Mammary epithelial cell (primary cell): ENCODE measurements at regions of chr4 and their contacts with region 1.

Region 1: GRCh38 chr4:2497931-2498330 is 29.0 kb downstream of the RNF4 start:
- DNase-seq: no peak
- H3K4me3 ChIP-seq: no peak overlapping the region
- H3K27ac ChIP-seq: no peak overlapping the region
- H3K4me1 ChIP-seq: no peaks in the 10 kb centered on the region
- H3K27me3 ChIP-seq: no peaks in the 10 kb centered on the region
- CTCF ChIP-seq: no peak

Region 2: DNA sequence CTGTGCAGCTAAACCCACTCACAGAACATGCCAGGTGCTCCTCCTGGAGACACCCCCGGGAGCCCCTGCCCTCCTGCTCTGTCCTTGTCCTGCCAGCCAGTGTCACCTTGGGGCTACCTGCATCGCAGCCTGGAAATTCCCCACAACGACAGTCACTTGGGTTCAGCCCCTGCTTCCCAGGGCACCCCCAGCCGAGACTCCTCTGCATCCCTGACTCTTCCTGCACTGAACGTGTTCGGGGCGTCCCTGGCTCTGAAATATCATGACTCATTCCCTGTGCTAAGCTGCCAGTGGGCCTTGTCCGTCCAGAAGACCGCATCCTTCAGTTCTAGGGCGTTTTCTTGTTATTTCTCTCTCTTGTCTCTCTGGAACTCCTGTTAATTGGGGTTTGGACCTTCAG is 73.3 kb before region 1 on chr4:
- CTCF ChIA-PET with region 1: no interaction called
- dilution Hi-C with region 1: loop called (anchors 5 kb)
- in situ Hi-C with region 1: no loop called
- intact Hi-C with region 1: no loop called
- DNase-seq: no peak
- H3K4me3 ChIP-seq: no peak overlapping the region
- H3K27ac ChIP-seq: no peak overlapping the region
- H3K4me1 ChIP-seq: no peaks in the 10 kb centered on the region
- H3K27me3 ChIP-seq: peaks cover 11% of the 10 kb centered on the region
- CTCF ChIP-seq: no peak

Region 3: DNA sequence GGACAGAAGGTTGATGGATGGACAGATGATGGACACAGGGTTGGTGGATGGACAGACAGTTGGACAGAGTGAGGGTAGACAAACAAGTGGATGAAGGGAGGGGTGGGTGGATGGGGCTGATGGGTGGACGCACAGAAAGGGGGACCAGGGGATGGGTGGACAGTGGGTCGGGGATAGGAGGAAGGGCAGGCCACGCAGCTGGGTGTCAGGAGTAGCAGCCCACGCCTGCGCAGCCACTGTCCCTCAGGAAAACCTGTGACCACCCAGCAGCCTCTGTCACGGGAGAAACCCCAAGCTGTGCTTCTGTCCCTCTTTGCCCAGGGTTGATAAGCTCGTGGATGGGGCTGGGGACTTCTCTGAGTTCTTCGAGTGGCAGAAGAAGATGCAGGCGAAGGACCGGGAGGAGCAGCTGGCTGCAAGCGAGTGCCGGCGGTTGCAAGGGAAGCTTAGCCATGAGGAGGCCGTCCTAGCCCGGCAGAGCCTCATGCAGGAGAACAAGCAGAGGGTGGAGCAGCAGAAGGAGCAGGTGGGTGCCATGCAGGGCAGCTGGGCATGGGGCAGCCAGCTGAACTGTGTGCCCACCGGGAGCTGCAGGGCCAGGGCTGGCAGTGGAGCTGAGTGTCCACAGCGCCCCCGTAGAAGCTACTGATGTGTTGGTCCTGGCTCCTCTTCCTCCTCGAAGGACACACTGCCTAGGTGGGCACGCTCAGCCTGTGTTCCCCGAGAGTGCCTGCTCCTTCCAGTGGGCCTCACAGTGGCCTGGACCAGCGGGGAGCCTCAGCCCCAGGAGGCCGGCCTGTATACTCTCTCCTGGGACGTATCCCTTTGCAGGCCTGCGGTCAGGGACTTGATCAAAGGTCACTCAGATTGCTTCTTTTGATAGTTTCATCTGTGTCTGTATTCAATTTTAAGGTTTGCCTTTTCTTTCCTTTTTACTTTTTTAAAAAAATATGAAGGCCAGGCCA is 45.8 kb before region 1 on chr4:
- CTCF ChIA-PET with region 1: no interaction called
- dilution Hi-C with region 1: loop called (anchors 5 kb)
- in situ Hi-C with region 1: no loop called
- intact Hi-C with region 1: no loop called
- DNase-seq: no peak
- H3K4me3 ChIP-seq: no peak overlapping the region
- H3K27ac ChIP-seq: no peak overlapping the region
- H3K4me1 ChIP-seq: no peaks in the 10 kb centered on the region
- H3K27me3 ChIP-seq: no peaks in the 10 kb centered on the region
- CTCF ChIP-seq: no peak

Region 4: DNA sequence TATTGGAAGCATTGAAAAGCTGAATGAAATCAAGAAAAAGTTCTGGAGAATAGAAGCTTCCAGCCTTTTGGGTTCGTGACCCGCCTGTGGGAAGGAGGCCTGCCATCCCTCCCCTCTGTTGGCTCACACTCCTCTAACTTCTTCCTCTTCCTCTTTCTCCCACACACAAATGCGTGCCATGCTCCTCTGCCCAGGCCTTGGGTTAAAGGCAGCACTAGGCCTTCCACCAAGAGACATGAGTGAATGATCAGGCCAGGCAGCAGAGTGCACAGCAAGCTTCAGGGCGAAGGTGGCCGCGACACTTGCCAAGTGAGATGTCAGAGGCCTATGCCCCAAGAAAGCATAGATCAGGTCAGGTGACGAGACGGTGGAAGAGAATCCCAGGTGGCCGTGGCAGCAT is 76.9 kb after region 1 on chr4:
- CTCF ChIA-PET with region 1: no interaction called
- dilution Hi-C with region 1: loop called (anchors 5 kb)
- in situ Hi-C with region 1: no loop called
- intact Hi-C with region 1: no loop called
- DNase-seq: no peak
- H3K4me3 ChIP-seq: no peak overlapping the region
- H3K27ac ChIP-seq: no peak overlapping the region
- H3K4me1 ChIP-seq: no peaks in the 10 kb centered on the region
- H3K27me3 ChIP-seq: no peaks in the 10 kb centered on the region
- CTCF ChIP-seq: no peak